ENCODE measurements at regions of chr19 and their contacts with region 1.

Region 1: GRCh38 chr19:28596561-28597071 is 616.3 kb downstream of the UQCRFS1 start:
- DNase-seq: no peak

Region 2: DNA sequence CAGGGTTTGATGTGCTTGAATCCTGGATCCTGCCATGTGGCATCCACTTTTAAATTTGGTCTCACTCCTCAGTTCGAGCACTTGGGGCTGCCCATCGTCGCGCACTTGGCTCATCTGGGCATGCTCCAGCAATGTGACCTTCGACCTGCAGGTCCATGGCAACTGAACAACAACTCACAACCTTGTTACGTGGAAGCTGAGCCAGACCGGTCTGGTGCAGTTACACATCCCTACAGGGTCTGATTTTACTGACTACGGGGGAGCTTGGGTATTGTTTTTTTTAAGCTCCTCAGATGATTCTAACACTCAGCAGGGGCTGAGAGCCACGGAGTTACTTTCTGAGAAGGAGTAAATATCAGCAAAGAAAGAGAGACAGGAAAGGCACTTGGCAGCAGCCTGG is 153.3 kb before region 1 on chr19:
- intact Hi-C with region 1: no loop called
- DNase-seq: no peak

Region 3: DNA sequence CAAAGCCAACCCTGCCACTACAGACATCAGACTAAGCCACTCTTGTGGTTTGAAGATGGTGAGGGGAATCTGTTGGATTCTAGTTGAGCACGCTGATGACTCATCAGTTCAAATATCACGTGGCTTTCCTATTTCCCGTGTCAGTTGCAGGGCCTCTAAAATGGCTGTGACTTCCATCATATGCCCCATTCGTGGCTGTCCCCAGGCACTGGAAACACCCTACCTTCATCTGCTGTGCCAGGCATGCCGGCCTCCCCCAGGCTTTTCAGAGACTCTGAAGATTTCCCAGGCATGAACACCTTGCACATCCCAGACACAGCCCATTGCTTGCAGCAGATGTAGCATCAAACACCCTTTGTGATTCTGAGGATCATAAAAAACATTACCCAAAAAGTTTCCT is 43.6 kb before region 1 on chr19:
- intact Hi-C with region 1: no loop called
- DNase-seq: no peak

Region 4: GRCh38 chr19:29844891-29845572 is 1248.4 kb after region 1 on chr19:
- intact Hi-C with region 1: loop called in 1 of 2 experiments (anchors 5 kb)
- DNase-seq: peak; percentile 98

Region 5: GRCh38 chr19:29923653-29924052 is 1327.0 kb after region 1 on chr19:
- intact Hi-C with region 1: no loop called
- DNase-seq: no peak